Activated CD4-positive, alpha-beta memory T cell treated with anti-CD3 and anti-CD28 coated beads, Interleukin-2, amount 10 ng/mL, durations not matched to agents 7 days and 5 days (primary cell): ENCODE measurements at regions of chr2 and their contacts with region 1.

Region 1: GRCh38 chr2:237474931-237475703 is 11.9 kb upstream of the MLPH start:
- DNase-seq: peak; percentile 75
- H3K4me3 Mint-ChIP-seq: peak overlapping the region; percentile 72
- H3K27ac Mint-ChIP-seq: peak overlapping the region; percentile 11
- H3K4me1 Mint-ChIP-seq: peaks cover 6% of the 10 kb centered on the region
- H3K27me3 Mint-ChIP-seq: peaks cover 26% of the 10 kb centered on the region

Region 2: GRCh38 chr2:237085248-237086221 is 389.6 kb before region 1 on chr2 and contains the start of gene COPS8:
- CTCF ChIA-PET with region 1: interaction called, 17 read pairs
- POLR2A ChIA-PET with region 1: no interaction called
- DNase-seq: peak; percentile 93
- H3K4me3 Mint-ChIP-seq: peak within 1 kb of the TSS; percentile 99
- H3K27ac Mint-ChIP-seq: peak within 1 kb of the TSS; percentile 95
- H3K4me1 Mint-ChIP-seq: peaks cover 23% of the 10 kb centered on the region
- H3K27me3 Mint-ChIP-seq: no peaks in the 10 kb centered on the region
- total RNA-seq, gene COPS8: 42.6 to 44.0 TPM

Region 3: GRCh38 chr2:237154082-237154638 is 321.0 kb before region 1 on chr2:
- CTCF ChIA-PET with region 1: interaction called, 15 read pairs
- POLR2A ChIA-PET with region 1: no interaction called
- DNase-seq: peak; percentile 59
- H3K4me3 Mint-ChIP-seq: no peak overlapping the region
- H3K27ac Mint-ChIP-seq: no peak overlapping the region
- H3K4me1 Mint-ChIP-seq: peaks cover 24% of the 10 kb centered on the region
- H3K27me3 Mint-ChIP-seq: peaks cover 1% of the 10 kb centered on the region

Region 4: GRCh38 chr2:237427769-237428506 is 47.2 kb before region 1 on chr2:
- CTCF ChIA-PET with region 1: interaction called, 110 read pairs
- POLR2A ChIA-PET with region 1: no interaction called
- DNase-seq: peak; percentile 57
- H3K4me3 Mint-ChIP-seq: no peak overlapping the region
- H3K27ac Mint-ChIP-seq: peak overlapping the region; percentile 33
- H3K4me1 Mint-ChIP-seq: peaks cover 53% of the 10 kb centered on the region
- H3K27me3 Mint-ChIP-seq: peaks cover 18% of the 10 kb centered on the region

Region 5: DNA sequence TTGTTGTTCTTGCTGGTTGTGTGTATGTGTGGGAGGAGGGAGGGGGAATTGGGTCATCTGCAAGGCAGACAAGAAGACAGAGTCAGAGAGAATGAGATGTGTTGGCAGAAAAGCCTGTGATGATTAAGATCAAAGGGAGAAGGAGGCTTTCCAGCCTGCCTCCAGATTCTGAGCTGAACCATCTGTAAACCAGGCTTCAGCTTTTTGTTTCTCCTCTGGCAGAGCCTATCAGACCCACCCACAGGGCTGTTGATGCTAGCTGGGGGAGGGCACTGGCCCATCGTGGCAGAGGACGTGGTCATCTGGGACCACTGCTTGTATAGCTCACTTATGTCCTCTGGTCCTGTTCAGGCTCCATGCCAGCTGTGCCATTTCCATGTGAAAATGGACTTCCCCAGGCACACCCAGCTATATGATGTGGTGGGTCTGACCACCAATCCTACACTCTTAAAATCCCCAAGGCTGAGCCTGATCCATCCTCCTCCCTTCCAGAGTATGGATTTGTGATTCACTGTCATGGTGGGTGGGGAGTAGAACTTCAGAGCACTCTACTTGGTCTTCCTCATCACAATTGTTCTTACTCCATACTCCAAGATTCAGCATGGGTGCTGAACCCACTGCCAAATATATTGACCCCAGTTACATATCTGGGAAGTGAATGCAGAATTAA is 33.4 kb before region 1 on chr2:
- CTCF ChIA-PET with region 1: interaction called, 10 read pairs
- POLR2A ChIA-PET with region 1: no interaction called
- DNase-seq: no peak
- H3K4me3 Mint-ChIP-seq: no peak overlapping the region
- H3K27ac Mint-ChIP-seq: peak overlapping the region; percentile 11
- H3K4me1 Mint-ChIP-seq: peaks cover 35% of the 10 kb centered on the region
- H3K27me3 Mint-ChIP-seq: peaks cover 2% of the 10 kb centered on the region

Region 6: DNA sequence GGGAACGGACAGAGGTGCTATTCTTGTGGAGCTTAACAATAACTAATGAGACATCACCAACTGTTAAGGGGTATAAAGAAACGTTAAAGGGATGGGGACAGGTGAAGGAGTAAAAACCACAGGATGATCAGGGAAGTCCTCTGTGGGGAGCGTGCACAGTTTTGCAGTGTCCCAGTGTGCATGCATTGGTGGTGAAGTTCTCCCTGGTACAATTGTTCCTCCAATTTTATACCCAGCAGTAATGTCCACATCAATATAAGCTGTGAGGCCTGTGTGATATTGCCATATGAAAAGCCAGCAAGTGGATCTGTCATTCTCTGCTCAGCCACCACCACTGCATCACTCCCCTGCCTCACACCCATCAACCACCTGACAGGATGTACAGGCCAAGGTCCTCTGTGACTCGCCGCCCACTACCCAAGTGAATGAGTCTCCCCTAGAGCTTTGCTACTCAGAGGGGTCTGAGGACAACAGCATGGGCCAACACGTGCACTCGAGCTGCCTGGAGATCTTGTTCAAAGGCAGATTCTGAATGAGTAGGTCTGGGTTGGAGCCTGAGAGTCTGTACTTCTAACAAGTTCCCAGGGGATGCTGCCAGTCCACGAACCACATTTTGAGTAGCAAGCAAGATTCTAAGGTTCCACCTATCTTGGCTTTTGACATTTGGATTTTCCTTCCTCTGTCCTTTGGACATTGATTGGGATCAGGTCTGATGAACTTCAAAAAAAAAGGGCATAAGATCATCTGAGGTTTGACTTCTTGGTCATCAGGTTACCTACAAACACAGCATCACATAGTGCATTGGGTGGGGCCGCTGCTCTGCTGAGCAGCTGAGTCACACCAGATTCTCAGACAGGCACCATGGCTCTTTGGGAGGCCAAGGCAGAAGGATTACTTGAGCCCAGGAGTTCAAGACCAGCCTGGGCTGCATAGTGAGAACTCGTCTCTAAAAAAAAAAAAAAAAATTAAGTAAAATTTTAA is 16.7 kb after region 1 on chr2:
- CTCF ChIA-PET with region 1: no interaction called
- POLR2A ChIA-PET with region 1: no interaction called
- DNase-seq: no peak
- H3K4me3 Mint-ChIP-seq: no peak overlapping the region
- H3K27ac Mint-ChIP-seq: no peak overlapping the region
- H3K4me1 Mint-ChIP-seq: no peaks in the 10 kb centered on the region
- H3K27me3 Mint-ChIP-seq: peaks cover 40% of the 10 kb centered on the region